ENCODE measurements at regions of chr1 and their contacts with region 1.

Region 1: GRCh38 chr1:89483010-89483756 is 41.4 kb upstream of the LRRC8B start:
- DNase-seq: peak; percentile 79
- H3K4me3 ChIP-seq: no peak overlapping the region
- H3K27ac ChIP-seq: no peak overlapping the region
- H3K4me1 ChIP-seq: no peaks in the 10 kb centered on the region
- H3K27me3 ChIP-seq: no peaks in the 10 kb centered on the region
- CTCF ChIP-seq: peak; percentile 26 to 68 (median 56)
- EP300 ChIP-seq: no peak
- POLR2A ChIP-seq: no peak

Region 2: DNA sequence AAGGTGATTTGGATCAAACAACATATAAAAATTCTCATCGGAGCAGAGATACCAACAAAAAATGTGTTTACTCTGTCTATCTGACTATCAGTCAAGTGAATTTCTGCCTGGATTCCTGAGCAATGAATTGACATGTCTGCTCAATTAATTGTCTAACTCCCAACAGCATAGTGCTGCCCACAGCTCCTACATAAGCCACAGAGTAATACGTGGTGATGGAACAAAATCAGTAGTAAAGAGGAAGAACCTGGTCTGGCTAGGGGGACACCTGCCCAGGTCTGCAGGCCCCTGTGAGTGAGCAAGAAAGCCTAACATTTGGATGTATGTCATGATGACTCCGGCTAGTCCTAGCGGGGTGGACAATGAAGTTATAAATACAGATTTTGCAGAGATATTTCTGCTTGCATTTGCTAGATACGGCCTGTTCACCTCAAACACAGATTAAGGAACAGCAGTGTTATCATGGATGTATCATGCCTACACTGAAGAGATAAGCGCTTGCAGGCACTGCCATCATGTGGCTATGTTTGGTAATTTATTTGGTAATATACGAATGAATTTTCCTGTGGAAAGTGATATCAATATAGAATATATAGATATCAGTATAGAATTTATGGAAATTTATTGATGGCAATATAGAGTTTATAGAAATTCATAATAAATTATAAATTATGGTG is 28.2 kb before region 1 on chr1:
- intact Hi-C with region 1: no loop called
- DNase-seq: no peak
- H3K4me3 ChIP-seq: no peak overlapping the region
- H3K27ac ChIP-seq: no peak overlapping the region
- H3K4me1 ChIP-seq: no peaks in the 10 kb centered on the region
- H3K27me3 ChIP-seq: no peaks in the 10 kb centered on the region
- CTCF ChIP-seq: peak; percentile 38 to 46 (median 40)
- EP300 ChIP-seq: no peak
- POLR2A ChIP-seq: no peak

Region 3: GRCh38 chr1:89598450-89599331 is 115.5 kb after region 1 on chr1:
- intact Hi-C with region 1: loop called (anchors 2 kb)
- DNase-seq: no peak
- H3K4me3 ChIP-seq: no peak overlapping the region
- H3K27ac ChIP-seq: no peak overlapping the region
- H3K4me1 ChIP-seq: no peaks in the 10 kb centered on the region
- H3K27me3 ChIP-seq: no peaks in the 10 kb centered on the region
- CTCF ChIP-seq: peak; percentile 9 to 61 (median 40)
- EP300 ChIP-seq: no peak
- POLR2A ChIP-seq: no peak

Region 4: GRCh38 chr1:89762779-89763648 is 279.8 kb after region 1 on chr1:
- intact Hi-C with region 1: loop called (anchors 5 kb)
- DNase-seq: peak; percentile 90
- H3K4me3 ChIP-seq: peak overlapping the region; percentile 23 to 51 (median 42)
- H3K27ac ChIP-seq: peak overlapping the region in 3 of 4 donors; percentile 30 to 53 (median 32)
- H3K4me1 ChIP-seq: peaks cover 0 to 11% (median 5%) of the 10 kb centered on the region in 4 donors
- H3K27me3 ChIP-seq: no peaks in the 10 kb centered on the region
- CTCF ChIP-seq: peak; percentile 68 to 96 (median 90)
- EP300 ChIP-seq: no peak
- POLR2A ChIP-seq: no peak